Activated CD4-positive, alpha-beta T cell treated with anti-CD3 and anti-CD28 coated beads, Interleukin-2, amount 10 ng/mL, durations not matched to agents 7 days and 5 days (primary cell): ENCODE measurements at regions of chr3 and their contacts with region 1.

Region 1: DNA sequence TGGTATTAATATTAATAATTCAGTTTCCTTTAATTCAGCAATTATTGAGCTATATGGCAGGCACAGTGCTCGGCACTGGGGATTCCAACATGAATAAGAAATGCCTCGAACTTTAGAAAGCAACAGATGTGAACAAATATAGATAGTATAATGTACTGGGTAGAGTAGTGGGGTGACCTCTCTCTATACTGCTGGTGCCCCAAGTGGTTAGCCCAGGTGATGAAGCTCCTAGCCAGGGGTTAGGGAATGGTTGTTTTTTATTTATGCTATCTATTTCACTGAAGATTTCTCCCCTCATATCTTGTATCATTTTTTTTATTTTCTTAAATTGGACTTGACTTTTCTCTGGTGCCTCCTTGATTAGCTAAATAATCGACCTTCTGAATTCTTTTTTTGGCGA is 62.1 kb downstream of the BHLHE40 start:
- DNase-seq: no peak
- H3K4me3 Mint-ChIP-seq: no peak overlapping the region
- H3K27ac Mint-ChIP-seq: no peak overlapping the region
- H3K4me1 Mint-ChIP-seq: peaks cover 17% of the 10 kb centered on the region
- H3K27me3 Mint-ChIP-seq: no peaks in the 10 kb centered on the region

Region 2: DNA sequence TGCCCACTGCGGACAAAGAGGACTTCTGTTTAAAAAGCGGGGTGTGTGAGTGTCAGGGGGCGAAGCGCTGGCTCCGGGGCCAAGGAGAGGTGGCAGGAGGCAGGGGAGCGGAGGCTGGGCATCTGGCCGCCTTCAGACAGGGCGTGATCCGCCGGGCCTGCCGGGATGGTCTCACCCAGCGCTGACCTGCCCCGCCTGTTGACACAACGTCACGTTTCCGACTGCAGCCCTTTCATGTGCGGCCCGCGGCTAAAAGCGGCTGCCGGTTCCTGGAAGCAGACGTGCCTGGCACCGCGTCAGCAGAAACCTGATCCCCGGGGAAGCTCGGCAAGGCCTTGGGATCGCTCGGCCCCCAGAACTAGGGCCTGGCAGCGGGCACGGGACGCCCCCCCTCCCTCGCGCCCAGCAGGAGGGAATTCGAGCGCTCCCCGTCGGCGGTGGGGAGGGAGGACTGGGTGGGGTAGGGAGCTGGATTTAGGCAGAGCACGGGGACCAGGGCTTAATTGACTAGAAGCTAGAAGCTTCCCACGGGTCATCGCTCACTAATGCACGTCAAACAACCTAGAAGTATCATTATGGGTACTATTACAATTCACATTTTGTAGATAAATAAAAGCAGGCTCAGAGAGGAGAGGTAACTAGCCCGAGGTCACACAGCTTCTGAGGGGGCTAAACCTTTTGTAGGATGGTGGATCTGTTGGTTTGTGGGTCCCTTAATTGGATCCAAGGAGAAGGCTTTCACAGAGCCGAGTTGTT is 54.4 kb before region 1 on chr3:
- CTCF ChIA-PET with region 1: interaction called, 13 read pairs
- POLR2A ChIA-PET with region 1: no interaction called
- DNase-seq: peak; percentile 80
- H3K4me3 Mint-ChIP-seq: peak overlapping the region; percentile 78
- H3K27ac Mint-ChIP-seq: peak overlapping the region; percentile 87
- H3K4me1 Mint-ChIP-seq: peaks cover 67% of the 10 kb centered on the region
- H3K27me3 Mint-ChIP-seq: no peaks in the 10 kb centered on the region

Region 3: GRCh38 chr3:5026331-5027218 is 14.7 kb before region 1 on chr3:
- CTCF ChIA-PET with region 1: interaction called, 11 read pairs
- POLR2A ChIA-PET with region 1: no interaction called
- DNase-seq: peak; percentile 63
- H3K4me3 Mint-ChIP-seq: peak overlapping the region; percentile 74
- H3K27ac Mint-ChIP-seq: peak overlapping the region; percentile 85
- H3K4me1 Mint-ChIP-seq: peaks cover 42% of the 10 kb centered on the region
- H3K27me3 Mint-ChIP-seq: peaks cover 2% of the 10 kb centered on the region

Region 4: GRCh38 chr3:5051772-5052171 is 10.5 kb after region 1 on chr3:
- CTCF ChIA-PET with region 1: interaction called, 10 read pairs
- POLR2A ChIA-PET with region 1: no interaction called
- DNase-seq: no peak
- H3K4me3 Mint-ChIP-seq: no peak overlapping the region
- H3K27ac Mint-ChIP-seq: no peak overlapping the region
- H3K4me1 Mint-ChIP-seq: peaks cover 34% of the 10 kb centered on the region
- H3K27me3 Mint-ChIP-seq: no peaks in the 10 kb centered on the region

Region 5: DNA sequence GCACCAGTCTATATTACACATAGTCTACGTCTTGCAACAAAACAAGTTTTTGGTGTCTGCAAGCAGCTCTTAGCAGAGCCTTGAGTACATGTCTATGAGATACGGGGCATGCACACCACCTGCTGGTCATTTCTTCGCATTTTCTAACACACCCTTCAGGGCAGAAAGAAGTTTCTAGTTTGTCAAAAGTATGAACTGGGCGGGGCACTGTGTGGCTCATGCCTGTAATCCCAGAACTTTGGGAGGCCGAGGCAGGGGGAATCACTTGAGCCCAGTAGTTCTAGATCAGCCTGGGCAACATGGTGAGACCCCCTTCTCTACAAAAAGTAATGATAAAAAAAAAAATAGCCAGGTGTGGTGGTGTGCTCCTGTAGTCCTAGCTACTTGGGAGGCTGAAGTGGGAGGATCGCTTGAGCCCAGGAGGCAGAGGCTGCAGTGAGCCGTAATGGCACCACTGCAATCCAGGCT is 16.6 kb after region 1 on chr3:
- CTCF ChIA-PET with region 1: interaction called, 16 read pairs
- POLR2A ChIA-PET with region 1: no interaction called
- DNase-seq: peak; percentile 84
- H3K4me3 Mint-ChIP-seq: no peak overlapping the region
- H3K27ac Mint-ChIP-seq: no peak overlapping the region
- H3K4me1 Mint-ChIP-seq: peaks cover 26% of the 10 kb centered on the region
- H3K27me3 Mint-ChIP-seq: peaks cover 7% of the 10 kb centered on the region